Posterior cingulate gyrus (tissue), 11 donors: ENCODE measurements at regions of chr7 and their contacts with region 1.

Region 1: DNA sequence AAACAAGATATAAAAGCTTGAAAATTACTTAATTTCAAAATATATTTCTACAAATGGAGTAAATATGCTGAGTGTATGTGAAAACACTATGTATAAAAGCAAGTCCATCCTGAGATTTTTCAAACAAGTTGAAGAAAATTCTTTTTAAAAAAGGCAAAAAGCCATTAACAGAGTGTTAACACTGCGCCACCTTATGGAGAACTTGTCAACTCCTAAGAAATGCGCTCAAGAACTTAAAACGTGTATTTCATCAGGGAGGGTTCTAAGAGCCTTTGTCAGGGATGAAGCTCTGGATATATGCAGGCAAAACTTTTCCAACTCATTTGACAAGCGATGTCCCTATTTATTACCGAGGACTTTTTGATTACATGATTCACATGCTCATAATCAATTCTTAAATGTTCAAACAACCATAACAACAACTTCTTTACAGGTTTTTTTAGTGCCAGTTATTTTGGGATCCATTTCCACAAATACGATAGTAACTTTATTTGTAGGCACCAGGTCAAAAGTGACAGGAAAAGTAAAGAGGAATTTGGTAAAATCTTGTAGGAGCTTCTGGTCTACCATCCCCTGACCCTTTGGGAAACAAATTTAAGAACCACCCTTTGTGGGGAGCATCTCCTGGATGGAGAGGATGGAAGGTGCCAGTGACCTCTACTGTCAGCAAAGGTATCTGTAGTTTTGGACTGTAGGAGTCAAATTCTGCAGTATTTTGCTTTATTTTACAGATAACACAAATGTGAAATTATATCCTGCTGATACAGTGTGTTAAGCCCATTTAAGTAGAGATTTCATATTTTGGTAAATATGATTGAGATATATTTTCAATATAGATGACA is 23.2 kb downstream of the CALCR start:
- DNase-seq: no peak

Region 2: GRCh38 chr7:93245525-93246432 is 305.5 kb before region 1 on chr7:
- intact Hi-C with region 1: loop called (anchors 2 kb)
- DNase-seq: no peak

Region 3: GRCh38 chr7:93646538-93646937 is 95.3 kb after region 1 on chr7:
- intact Hi-C with region 1: no loop called
- DNase-seq: no peak

Region 4: DNA sequence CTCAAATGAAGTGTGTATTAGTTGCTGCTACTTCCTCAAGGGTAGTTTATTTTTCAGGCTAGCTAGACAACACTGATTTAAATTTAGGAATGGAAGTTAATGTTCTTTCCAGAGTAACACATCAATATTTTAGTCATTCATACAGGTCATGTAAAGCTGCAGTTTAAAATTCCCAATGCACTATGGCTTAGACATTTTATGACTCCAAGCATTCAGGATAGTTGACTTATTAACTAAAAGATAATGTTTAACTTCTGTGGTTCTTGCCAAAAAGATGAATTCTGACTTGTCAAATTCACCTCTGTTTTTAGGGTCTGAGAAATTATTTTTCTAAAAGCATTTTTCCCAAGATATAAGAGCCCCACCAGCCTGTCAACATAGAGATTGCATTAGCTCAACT is 207.3 kb after region 1 on chr7:
- intact Hi-C with region 1: no loop called
- DNase-seq: no peak